ENCODE measurements at regions of chr1 and their contacts with region 1.

Region 1: GRCh38 chr1:94962409-94963265 is 35.7 kb upstream of the CNN3 start:
- DNase-seq: no peak
- ATAC-seq: no peak
- H3K4me3 ChIP-seq: peak overlapping the region in 1 of 2 experiments; percentile 34; a peak in 3 of 4 replicates
- H3K27ac ChIP-seq: peak overlapping the region; percentile 37; the same call in 1 of the 2 replicates
- H3K4me1 ChIP-seq: 0 out of 2 replicates have a peak, but pooled peaks cover 2% of the 10 kb centered on the region
- H3K27me3 ChIP-seq: no peaks in the 10 kb centered on the region
- CTCF ChIP-seq: no peak

Region 2: GRCh38 chr1:94952539-94952938 is 10.1 kb before region 1 on chr1:
- CTCF ChIA-PET with region 1: no interaction called
- POLR2A ChIA-PET with region 1: interaction called, 10 read pairs
- in situ Hi-C with region 1: no loop called
- intact Hi-C with region 1: no loop called
- DNase-seq: no peak
- ATAC-seq: no peak
- H3K4me3 ChIP-seq: no peak overlapping the region
- H3K27ac ChIP-seq: no peak overlapping the region
- H3K4me1 ChIP-seq: no peaks in the 10 kb centered on the region
- H3K27me3 ChIP-seq: no peaks in the 10 kb centered on the region
- CTCF ChIP-seq: no peak